ENCODE measurements at regions of chr15 and their contacts with region 1.

Region 1: DNA sequence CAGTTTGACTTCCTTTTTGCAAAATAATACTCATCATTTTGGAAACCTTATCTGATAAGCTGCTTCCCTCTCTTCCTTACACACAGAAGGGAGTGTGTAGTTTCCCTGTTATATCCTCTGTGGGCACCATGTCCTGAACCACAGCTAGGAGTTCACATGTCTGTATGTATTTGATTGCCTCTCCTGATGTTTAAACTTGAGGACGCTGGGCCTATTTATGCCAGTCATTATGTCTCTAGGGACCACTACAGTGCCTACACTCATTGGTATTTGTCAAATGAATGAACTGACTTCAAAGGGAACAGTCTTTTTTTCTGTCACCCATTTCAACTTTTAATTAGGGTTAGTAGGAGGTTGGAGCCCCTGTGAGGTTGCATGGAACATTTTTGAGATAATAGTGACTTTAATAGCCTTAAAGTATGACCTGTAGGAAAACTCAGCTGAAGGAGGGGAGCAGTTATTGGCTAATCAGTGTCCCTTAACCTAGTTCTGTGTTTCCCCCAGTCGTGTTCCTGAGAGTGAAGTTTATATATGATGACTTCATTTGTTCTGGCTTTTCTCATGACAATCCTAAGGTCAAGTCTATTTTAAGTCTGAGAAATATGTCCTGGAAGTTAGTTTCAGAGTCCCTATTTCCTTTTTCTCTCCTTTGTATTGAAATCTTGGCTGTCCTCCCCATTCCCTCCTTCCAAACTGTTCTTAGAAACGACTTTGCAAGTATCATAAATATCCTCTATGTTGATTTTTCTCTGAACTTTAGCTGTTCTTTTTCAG is 28.9 kb downstream of the PDE8A start:
- DNase-seq: peak in 1 of 2 experiments; percentile 46
- H3K4me3 ChIP-seq: no peak overlapping the region
- H3K4me3 Mint-ChIP-seq: no peak overlapping the region
- H3K27ac Mint-ChIP-seq: peak overlapping the region; percentile 10
- H3K4me1 ChIP-seq: peaks cover 11% of the 10 kb centered on the region; the same call in 1 of the 2 replicates
- H3K4me1 Mint-ChIP-seq: peaks cover 21% of the 10 kb centered on the region
- H3K27me3 ChIP-seq: no peaks in the 10 kb centered on the region
- H3K27me3 Mint-ChIP-seq: no peaks in the 10 kb centered on the region
- CTCF ChIP-seq: peak; percentile 57 to 62

Region 2: GRCh38 chr15:84588053-84588874 is 422.3 kb before region 1 on chr15:
- CTCF ChIA-PET with region 1: interaction called, 3 read pairs
- POLR2A ChIA-PET with region 1: no interaction called
- intact Hi-C with region 1: loop called (anchors 1 kb)
- DNase-seq: peak; percentile 83 to 91
- H3K4me3 ChIP-seq: peak overlapping the region; percentile 26
- H3K4me3 Mint-ChIP-seq: peak overlapping the region; percentile 67
- H3K27ac Mint-ChIP-seq: no peak overlapping the region
- H3K4me1 ChIP-seq: no peaks in the 10 kb centered on the region
- H3K4me1 Mint-ChIP-seq: no peaks in the 10 kb centered on the region
- H3K27me3 ChIP-seq: no peaks in the 10 kb centered on the region
- H3K27me3 Mint-ChIP-seq: peaks cover 7% of the 10 kb centered on the region
- CTCF ChIP-seq: peak; percentile 77 to 90

Region 3: DNA sequence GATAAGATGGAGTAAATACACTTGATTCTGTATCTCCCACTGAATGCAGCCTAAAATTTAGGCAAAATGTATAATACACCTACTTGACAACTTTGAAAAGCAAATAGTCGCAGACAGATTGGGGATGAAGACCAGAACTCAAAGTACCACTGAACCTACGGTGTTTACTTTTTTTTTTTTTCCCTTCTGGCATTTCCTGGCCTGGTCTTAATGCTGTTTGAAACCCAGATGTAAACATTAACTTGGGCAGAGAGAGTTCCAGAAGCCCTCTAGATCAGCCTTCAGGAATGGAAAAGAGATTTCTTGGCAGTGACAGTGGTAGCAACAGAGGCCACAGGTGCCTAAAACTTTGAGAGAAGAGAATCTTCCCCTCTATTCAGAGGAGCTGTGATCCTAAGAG is 165.6 kb before region 1 on chr15:
- CTCF ChIA-PET with region 1: no interaction called
- POLR2A ChIA-PET with region 1: no interaction called
- intact Hi-C with region 1: loop called (anchors 1 kb)
- DNase-seq: no peak
- H3K4me3 ChIP-seq: no peak overlapping the region
- H3K4me3 Mint-ChIP-seq: no peak overlapping the region
- H3K27ac Mint-ChIP-seq: no peak overlapping the region
- H3K4me1 ChIP-seq: no peaks in the 10 kb centered on the region
- H3K4me1 Mint-ChIP-seq: no peaks in the 10 kb centered on the region
- H3K27me3 ChIP-seq: no peaks in the 10 kb centered on the region
- H3K27me3 Mint-ChIP-seq: no peaks in the 10 kb centered on the region
- CTCF ChIP-seq: no peak

Region 4: GRCh38 chr15:84955089-84955848 is 55.3 kb before region 1 on chr15:
- CTCF ChIA-PET with region 1: interaction called, 28 read pairs
- POLR2A ChIA-PET with region 1: no interaction called
- intact Hi-C with region 1: loop called (anchors 1 kb)
- DNase-seq: peak; percentile 81 to 82
- H3K4me3 ChIP-seq: peak overlapping the region; percentile 19; the same call in 1 of the 2 replicates
- H3K4me3 Mint-ChIP-seq: peak overlapping the region; percentile 39
- H3K27ac Mint-ChIP-seq: no peak overlapping the region
- H3K4me1 ChIP-seq: peaks cover 18% of the 10 kb centered on the region
- H3K4me1 Mint-ChIP-seq: peaks cover 7% of the 10 kb centered on the region
- H3K27me3 ChIP-seq: no peaks in the 10 kb centered on the region; the same call in 1 of the 2 replicates
- H3K27me3 Mint-ChIP-seq: no peaks in the 10 kb centered on the region
- CTCF ChIP-seq: peak; percentile 79 to 92

Region 5: GRCh38 chr15:84981054-84981710 is 29.4 kb before region 1 on chr15:
- CTCF ChIA-PET with region 1: interaction called, 7 read pairs
- POLR2A ChIA-PET with region 1: no interaction called
- intact Hi-C with region 1: loop called (anchors 1 kb)
- DNase-seq: peak; percentile 93 to 98
- H3K4me3 ChIP-seq: peak overlapping the region; percentile 86
- H3K4me3 Mint-ChIP-seq: peak overlapping the region; percentile 92
- H3K27ac Mint-ChIP-seq: peak overlapping the region; percentile 91
- H3K4me1 ChIP-seq: 0 out of 2 replicates have a peak, but pooled peaks cover 8% of the 10 kb centered on the region
- H3K4me1 Mint-ChIP-seq: no peaks in the 10 kb centered on the region
- H3K27me3 ChIP-seq: no peaks in the 10 kb centered on the region
- H3K27me3 Mint-ChIP-seq: no peaks in the 10 kb centered on the region
- CTCF ChIP-seq: peak; percentile 6 to 27

Measured in Caco-2 (cell line).